ENCODE measurements at regions of chr1 and their contacts with region 1.

Region 1: GRCh38 chr1:33430692-33431593 is at the start of gene PHC2:
- DNase-seq: peak; percentile 98
- ATAC-seq: peak; percentile 65
- H3K4me3 ChIP-seq: peak within 1 kb of the TSS; percentile 91
- H3K27ac ChIP-seq: peak within 1 kb of the TSS; percentile 97
- H3K4me1 ChIP-seq: peaks cover 71% of the 10 kb centered on the region
- H3K27me3 ChIP-seq: no peaks in the 10 kb centered on the region
- CTCF ChIP-seq: peak; percentile 23; the same call in 1 of the 2 replicates
- total RNA-seq, gene PHC2: 125 and 134 TPM in 2 replicates

Region 2: DNA sequence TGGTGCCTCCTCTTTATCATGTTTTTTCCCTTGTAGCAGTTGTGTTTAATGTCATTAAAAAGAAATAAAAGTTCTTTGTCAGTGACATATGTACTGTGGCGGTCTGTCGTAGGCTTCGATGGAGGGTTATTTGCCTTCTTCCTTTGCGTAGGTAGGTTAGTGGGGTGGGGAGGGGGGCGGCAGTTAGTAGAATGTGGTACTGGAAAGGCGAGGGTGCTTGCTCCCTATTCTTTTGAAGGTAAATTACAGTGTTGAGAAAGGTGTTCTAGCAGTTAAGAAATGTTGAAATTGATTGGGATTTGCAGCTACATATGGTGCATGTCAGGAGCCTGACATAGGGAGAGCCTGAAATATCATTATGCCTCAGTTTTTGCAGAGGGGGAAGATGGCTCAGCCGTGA is 572.2 kb before region 1 on chr1:
- CTCF ChIA-PET with region 1: no interaction called
- POLR2A ChIA-PET with region 1: no interaction called
- intact Hi-C with region 1: no loop called
- DNase-seq: no peak
- ATAC-seq: no peak
- H3K4me3 ChIP-seq: no peak overlapping the region
- H3K27ac ChIP-seq: no peak overlapping the region
- H3K4me1 ChIP-seq: no peaks in the 10 kb centered on the region
- H3K27me3 ChIP-seq: no peaks in the 10 kb centered on the region
- CTCF ChIP-seq: no peak

Region 3: DNA sequence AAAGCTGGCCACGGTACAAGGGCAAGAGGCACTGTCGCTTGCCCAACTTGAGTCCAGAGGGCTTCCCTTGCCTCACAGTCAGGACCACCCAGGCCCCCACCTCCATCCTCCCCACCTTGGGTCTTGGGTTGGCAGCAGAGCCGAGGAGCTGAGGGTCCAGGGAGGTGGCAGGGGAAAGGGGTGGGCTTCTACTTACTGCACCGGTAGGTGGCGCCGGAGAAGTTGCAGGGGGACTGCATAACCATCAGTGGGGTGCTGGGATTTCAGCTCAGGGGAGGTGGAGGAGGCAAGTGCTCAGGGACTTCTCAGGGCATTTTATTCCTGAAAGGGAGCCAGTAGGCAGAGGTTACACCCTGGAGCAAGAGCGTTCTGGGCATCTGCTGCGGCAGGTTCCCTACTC is 293.1 kb before region 1 on chr1:
- CTCF ChIA-PET with region 1: no interaction called
- POLR2A ChIA-PET with region 1: no interaction called
- intact Hi-C with region 1: no loop called
- DNase-seq: no peak
- ATAC-seq: no peak
- H3K4me3 ChIP-seq: no peak overlapping the region
- H3K27ac ChIP-seq: no peak overlapping the region
- H3K4me1 ChIP-seq: no peaks in the 10 kb centered on the region
- H3K27me3 ChIP-seq: no peaks in the 10 kb centered on the region
- CTCF ChIP-seq: peak; percentile 31; the same call in 1 of the 2 replicates

Region 4: DNA sequence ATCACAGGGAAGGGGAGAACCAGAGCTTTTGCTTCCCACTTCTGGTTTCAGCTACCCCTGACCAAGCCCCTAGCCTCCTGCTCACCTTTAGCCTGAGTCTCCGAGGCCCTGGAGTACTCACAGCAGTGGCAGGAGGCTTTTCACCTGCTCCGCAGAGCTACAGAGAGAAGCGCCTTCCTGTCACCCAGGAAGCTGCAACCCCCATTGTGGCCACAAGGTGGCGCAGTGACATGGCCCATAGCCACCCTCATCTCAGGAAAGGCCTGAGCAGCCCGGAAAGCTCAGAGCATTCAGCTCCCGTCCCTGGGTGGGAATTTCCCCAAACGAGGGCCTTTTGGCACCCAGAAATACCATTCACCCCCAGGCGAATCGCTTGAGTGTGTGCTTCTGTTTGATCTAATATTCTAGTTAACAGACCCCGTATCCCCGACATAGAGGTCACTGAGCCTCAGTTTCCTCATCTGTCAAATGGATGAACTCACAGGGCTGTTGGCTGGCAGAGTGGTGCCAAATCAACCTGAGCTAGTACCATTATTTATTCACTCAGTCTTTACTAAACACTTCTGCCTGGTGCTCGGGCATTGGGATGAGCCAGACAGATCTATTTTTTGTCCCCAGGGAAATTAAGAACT is 135.4 kb before region 1 on chr1:
- CTCF ChIA-PET with region 1: interaction called, 21 read pairs
- POLR2A ChIA-PET with region 1: no interaction called
- intact Hi-C with region 1: no loop called
- DNase-seq: peak; percentile 93
- ATAC-seq: peak; percentile 87
- H3K4me3 ChIP-seq: no peak overlapping the region
- H3K27ac ChIP-seq: no peak overlapping the region
- H3K4me1 ChIP-seq: no peaks in the 10 kb centered on the region
- H3K27me3 ChIP-seq: no peaks in the 10 kb centered on the region
- CTCF ChIP-seq: peak; percentile 98

Region 5: GRCh38 chr1:33384040-33384812 is 46.7 kb before region 1 on chr1:
- CTCF ChIA-PET with region 1: no interaction called
- POLR2A ChIA-PET with region 1: no interaction called
- intact Hi-C with region 1: loop called (anchors 1 kb)
- DNase-seq: peak; percentile 55
- ATAC-seq: peak; percentile 70
- H3K4me3 ChIP-seq: no peak overlapping the region
- H3K27ac ChIP-seq: no peak overlapping the region
- H3K4me1 ChIP-seq: peaks cover 17% of the 10 kb centered on the region
- H3K27me3 ChIP-seq: no peaks in the 10 kb centered on the region
- CTCF ChIP-seq: no peak

Region 6: GRCh38 chr1:33462405-33463164 is 31.6 kb after region 1 on chr1:
- CTCF ChIA-PET with region 1: no interaction called
- POLR2A ChIA-PET with region 1: interaction called, 15 read pairs
- intact Hi-C with region 1: no loop called
- DNase-seq: no peak
- ATAC-seq: no peak
- H3K4me3 ChIP-seq: no peak overlapping the region
- H3K27ac ChIP-seq: no peak overlapping the region
- H3K4me1 ChIP-seq: peaks cover 23% of the 10 kb centered on the region
- H3K27me3 ChIP-seq: no peaks in the 10 kb centered on the region
- CTCF ChIP-seq: no peak

Region 7: DNA sequence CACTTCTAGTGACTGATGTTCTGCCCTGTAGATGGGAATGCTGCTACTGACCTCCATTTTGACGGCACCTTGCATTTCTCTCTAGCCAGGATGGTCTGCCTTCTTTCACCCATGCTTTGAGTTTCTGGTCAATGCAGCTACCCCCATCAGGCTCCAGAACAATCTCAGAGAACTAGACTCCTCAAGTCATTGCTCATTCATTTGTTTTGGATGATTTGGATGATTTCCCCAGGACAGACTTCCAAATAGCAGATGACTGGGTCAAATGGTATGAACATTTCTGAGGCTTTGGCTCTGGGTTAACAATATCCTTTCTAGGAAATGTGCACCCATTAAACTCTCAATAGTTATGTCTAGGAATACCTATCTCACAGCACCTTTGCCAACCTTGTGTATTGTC is 670.2 kb after region 1 on chr1:
- CTCF ChIA-PET with region 1: no interaction called
- POLR2A ChIA-PET with region 1: no interaction called
- intact Hi-C with region 1: no loop called
- DNase-seq: no peak
- ATAC-seq: no peak
- H3K4me3 ChIP-seq: no peak overlapping the region
- H3K27ac ChIP-seq: no peak overlapping the region
- H3K4me1 ChIP-seq: no peaks in the 10 kb centered on the region
- H3K27me3 ChIP-seq: peaks cover 29% of the 10 kb centered on the region; the same call in 1 of the 2 replicates
- CTCF ChIP-seq: no peak

Measured in PC-3 (cell line).